Heart right ventricle (tissue), 16 donors: ENCODE measurements at regions of chr11 and their contacts with region 1.

Region 1: GRCh38 chr11:134033696-134034491 is 35.0 kb upstream of the JAM3 start:
- DNase-seq: peak; percentile 82 to 90
- ATAC-seq: peak; percentile 88 to 93 (median 90)
- H3K4me3 ChIP-seq: peak overlapping the region in 7 of 10 donors; percentile 19 to 48 (median 30)
- H3K27ac ChIP-seq: peak overlapping the region; percentile 75 to 93 (median 88)
- H3K4me1 ChIP-seq: peaks cover 22 to 64% (median 47%) of the 10 kb centered on the region in 9 donors
- H3K27me3 ChIP-seq: peaks cover 0 to 17% (median 0%) of the 10 kb centered on the region in 7 donors
- CTCF ChIP-seq: peak in 2 of 9 donors; percentile 6 to 8

Region 2: GRCh38 chr11:133927690-133928627 is 105.9 kb before region 1 on chr11:
- intact Hi-C with region 1: loop called in 1 of 10 experiments (anchors 5 kb)
- DNase-seq: peak; percentile 57 to 67
- ATAC-seq: peak; percentile 74 to 88 (median 82)
- H3K4me3 ChIP-seq: peak overlapping the region in 5 of 10 donors; percentile 13 to 41 (median 17)
- H3K27ac ChIP-seq: peak overlapping the region in 1 of 10 donors; percentile 20
- H3K4me1 ChIP-seq: peaks cover 5 to 22% (median 14%) of the 10 kb centered on the region in 9 donors
- H3K27me3 ChIP-seq: no peaks in the 10 kb centered on the region
- CTCF ChIP-seq: peak; percentile 67 to 91 (median 86)

Region 3: GRCh38 chr11:133947321-133947756 is 86.6 kb before region 1 on chr11:
- intact Hi-C with region 1: loop called in 1 of 10 experiments (anchors 5 kb)
- DNase-seq: peak; percentile 57 to 65
- ATAC-seq: peak; percentile 24 to 59 (median 42)
- H3K4me3 ChIP-seq: peak overlapping the region in 6 of 10 donors; percentile 1 to 32 (median 10)
- H3K27ac ChIP-seq: peak overlapping the region in 9 of 10 donors; percentile 5 to 95 (median 63)
- H3K4me1 ChIP-seq: peaks cover 27 to 88% (median 70%) of the 10 kb centered on the region in 9 donors
- H3K27me3 ChIP-seq: peaks cover 0 to 12% (median 0%) of the 10 kb centered on the region in 7 donors
- CTCF ChIP-seq: peak in 8 of 9 donors; percentile 21 to 68 (median 48)

Region 4: GRCh38 chr11:133956650-133957633 is 77.0 kb before region 1 on chr11 and contains the start of gene IGSF9B:
- intact Hi-C with region 1: loop called in 5 of 10 experiments (anchors 5 kb)
- DNase-seq: peak; percentile 86 to 88
- ATAC-seq: peak; percentile 78 to 90 (median 88)
- H3K4me3 ChIP-seq: peak within 1 kb of the TSS; percentile 47 to 73 (median 68)
- H3K27ac ChIP-seq: peak within 1 kb of the TSS; percentile 67 to 96 (median 90)
- H3K4me1 ChIP-seq: peaks cover 7 to 54% (median 33%) of the 10 kb centered on the region in 9 donors
- H3K27me3 ChIP-seq: peaks cover 0 to 63% (median 6%) of the 10 kb centered on the region in 7 donors
- CTCF ChIP-seq: no peak
- total RNA-seq, gene IGSF9B: 31.0 to 72.3 (median 50.1) TPM

Region 5: DNA sequence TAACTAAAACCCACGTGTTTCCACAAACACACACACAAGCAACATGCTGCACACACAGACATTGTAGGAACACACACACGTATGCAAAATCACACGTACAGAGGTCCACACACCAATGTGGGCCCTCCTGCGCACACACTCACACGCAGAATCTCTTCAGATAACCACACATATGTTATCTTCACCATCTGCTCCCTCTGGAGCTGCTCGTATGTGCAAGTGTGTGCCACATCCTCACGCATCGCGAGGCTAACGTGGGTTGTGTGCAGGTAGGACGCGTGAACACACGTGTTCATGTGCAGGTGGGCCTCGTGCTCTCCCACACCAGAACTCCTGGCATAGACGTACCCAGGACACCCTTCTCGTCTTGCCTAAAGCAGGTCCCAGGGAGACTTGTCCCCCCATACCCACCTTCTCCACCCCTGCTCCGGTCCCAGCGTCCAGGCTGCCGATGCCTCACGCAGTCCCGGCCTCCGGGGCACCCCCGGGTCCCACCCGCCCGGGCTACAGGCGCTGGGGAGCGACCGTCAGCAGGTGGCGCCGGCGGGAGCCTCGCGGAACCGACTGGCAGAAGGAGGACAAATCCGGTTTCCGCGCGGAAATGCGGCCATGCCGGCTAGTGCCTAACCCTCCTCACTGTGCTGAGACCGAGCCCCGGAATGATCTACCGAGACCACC is 66.8 kb before region 1 on chr11:
- intact Hi-C with region 1: loop called in 2 of 10 experiments (anchors 2 to 5 kb)
- DNase-seq: peak; percentile 56 to 77
- ATAC-seq: peak; percentile 49 to 84 (median 76)
- H3K4me3 ChIP-seq: peak overlapping the region in 7 of 10 donors; percentile 22 to 49 (median 40)
- H3K27ac ChIP-seq: no peak overlapping the region
- H3K4me1 ChIP-seq: peaks cover 0 to 11% (median 4%) of the 10 kb centered on the region in 9 donors
- H3K27me3 ChIP-seq: peaks cover 0 to 23% (median 3%) of the 10 kb centered on the region in 7 donors
- CTCF ChIP-seq: peak; percentile 29 to 81 (median 69)

Region 6: GRCh38 chr11:134086376-134086775 is 52.5 kb after region 1 on chr11:
- intact Hi-C with region 1: no loop called
- DNase-seq: no peak
- ATAC-seq: no peak
- H3K4me3 ChIP-seq: no peak overlapping the region
- H3K27ac ChIP-seq: no peak overlapping the region
- H3K4me1 ChIP-seq: no peaks in the 10 kb centered on the region
- H3K27me3 ChIP-seq: no peaks in the 10 kb centered on the region
- CTCF ChIP-seq: no peak